ENCODE measurements at regions of chr16 and their contacts with region 1.

Region 1: GRCh38 chr16:3413730-3414379 is 12.8 kb downstream of the ZNF174 start:
- DNase-seq: no peak
- ATAC-seq: no peak
- H3K4me3 ChIP-seq: no peak overlapping the region
- H3K4me3 Mint-ChIP-seq: no peak overlapping the region
- H3K27ac ChIP-seq: no peak overlapping the region
- H3K27ac Mint-ChIP-seq: no peak overlapping the region
- H3K4me1 ChIP-seq: no peaks in the 10 kb centered on the region
- H3K4me1 Mint-ChIP-seq: no peaks in the 10 kb centered on the region
- H3K27me3 ChIP-seq: peaks cover 0 to 7% of the 10 kb centered on the region in 2 experiments
- H3K27me3 Mint-ChIP-seq: no peaks in the 10 kb centered on the region

Region 2: GRCh38 chr16:3214904-3215600 is 198.8 kb before region 1 on chr16:
- CTCF ChIA-PET with region 1: interaction called in 1 of 2 experiments, 11 read pairs
- POLR2A ChIA-PET with region 1: no interaction called
- DNase-seq: peak in 28 of 35 experiments; percentile 3 to 78 (median 52)
- ATAC-seq: peak; percentile 90 to 94 (median 92)
- H3K4me3 ChIP-seq: peak overlapping the region in 1 of 2 donors; percentile 4
- H3K4me3 Mint-ChIP-seq: peak overlapping the region; percentile 62 to 73 (median 63)
- H3K27ac ChIP-seq: peak overlapping the region; percentile 92
- H3K27ac Mint-ChIP-seq: peak overlapping the region; percentile 96 to 98
- H3K4me1 ChIP-seq: peaks cover 15 to 43% of the 10 kb centered on the region in 2 experiments
- H3K4me1 Mint-ChIP-seq: peaks cover 33 to 51% (median 46%) of the 10 kb centered on the region in 3 donors
- H3K27me3 ChIP-seq: no peaks in the 10 kb centered on the region
- H3K27me3 Mint-ChIP-seq: no peaks in the 10 kb centered on the region

Region 3: GRCh38 chr16:3457434-3458252 is 43.8 kb after region 1 on chr16:
- CTCF ChIA-PET with region 1: no interaction called
- POLR2A ChIA-PET with region 1: no interaction called
- DNase-seq: peak; percentile 74 to 96 (median 88)
- ATAC-seq: peak; percentile 91 to 95 (median 92)
- H3K4me3 ChIP-seq: peak overlapping the region; percentile 45 to 87
- H3K4me3 Mint-ChIP-seq: peak overlapping the region; percentile 80 to 91 (median 80)
- H3K27ac ChIP-seq: peak overlapping the region; percentile 73
- H3K27ac Mint-ChIP-seq: peak overlapping the region; percentile 86 to 92
- H3K4me1 ChIP-seq: peaks cover 24 to 46% of the 10 kb centered on the region in 2 experiments
- H3K4me1 Mint-ChIP-seq: peaks cover 46 to 49% (median 49%) of the 10 kb centered on the region in 3 donors
- H3K27me3 ChIP-seq: no peaks in the 10 kb centered on the region
- H3K27me3 Mint-ChIP-seq: no peaks in the 10 kb centered on the region